Activated CD8-positive, alpha-beta memory T cell treated with anti-CD3 and anti-CD28 coated beads, Interleukin-2, amount 10 ng/mL, durations not matched to agents 7 days and 5 days (primary cell): ENCODE measurements at regions of chr5 and their contacts with region 1.

Region 1: DNA sequence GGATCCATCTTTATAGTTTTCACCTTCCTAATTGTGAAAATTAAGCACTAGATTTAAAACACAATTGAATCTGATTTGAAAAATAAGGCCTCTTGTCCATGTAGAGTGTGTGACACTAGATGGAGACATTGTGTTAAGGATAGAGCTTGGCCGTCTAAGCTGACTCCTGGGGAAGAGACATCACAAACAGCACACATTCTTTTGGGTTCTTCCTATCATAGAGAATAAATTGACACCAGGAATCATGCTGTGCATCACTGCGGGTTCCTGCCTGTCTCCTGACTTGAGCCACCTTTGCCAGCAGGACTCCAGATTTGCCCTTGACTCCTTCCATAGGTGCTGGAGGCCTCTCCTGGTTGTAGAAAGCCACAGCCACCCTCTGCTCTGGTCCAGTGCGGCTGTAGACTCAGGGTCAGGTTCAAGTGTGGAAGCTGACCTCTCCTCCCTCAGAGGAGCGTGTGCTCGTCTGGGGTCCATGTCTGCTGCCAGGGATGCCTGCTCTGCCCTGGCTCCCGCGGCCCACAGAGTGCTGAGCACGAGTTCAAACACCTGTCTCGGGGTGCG is 11.2 kb downstream of the ROPN1L start:
- DNase-seq: no peak
- ATAC-seq: peak; percentile 87
- H3K4me3 Mint-ChIP-seq: no peak overlapping the region
- H3K27ac Mint-ChIP-seq: peak overlapping the region; percentile 13
- H3K4me1 Mint-ChIP-seq: peaks cover 12% of the 10 kb centered on the region
- H3K27me3 Mint-ChIP-seq: no peaks in the 10 kb centered on the region

Region 2: GRCh38 chr5:10441083-10441991 is 11.5 kb before region 1 on chr5 and contains the start of gene ROPN1L:
- CTCF ChIA-PET with region 1: interaction called, 12 read pairs
- DNase-seq: peak; percentile 84
- ATAC-seq: peak; percentile 98
- H3K4me3 Mint-ChIP-seq: peak within 1 kb of the TSS; percentile 79
- H3K27ac Mint-ChIP-seq: peak within 1 kb of the TSS; percentile 26
- H3K4me1 Mint-ChIP-seq: peaks cover 40% of the 10 kb centered on the region
- H3K27me3 Mint-ChIP-seq: peaks cover 12% of the 10 kb centered on the region
- total RNA-seq, gene ROPN1L: 1.1 to 2.4 TPM

Region 3: GRCh38 chr5:10489810-10490426 is 37.1 kb after region 1 on chr5:
- CTCF ChIA-PET with region 1: no interaction called
- DNase-seq: peak; percentile 51
- ATAC-seq: peak; percentile 92
- H3K4me3 Mint-ChIP-seq: no peak overlapping the region
- H3K27ac Mint-ChIP-seq: peak overlapping the region; percentile 55
- H3K4me1 Mint-ChIP-seq: peaks cover 24% of the 10 kb centered on the region
- H3K27me3 Mint-ChIP-seq: no peaks in the 10 kb centered on the region

Region 4: DNA sequence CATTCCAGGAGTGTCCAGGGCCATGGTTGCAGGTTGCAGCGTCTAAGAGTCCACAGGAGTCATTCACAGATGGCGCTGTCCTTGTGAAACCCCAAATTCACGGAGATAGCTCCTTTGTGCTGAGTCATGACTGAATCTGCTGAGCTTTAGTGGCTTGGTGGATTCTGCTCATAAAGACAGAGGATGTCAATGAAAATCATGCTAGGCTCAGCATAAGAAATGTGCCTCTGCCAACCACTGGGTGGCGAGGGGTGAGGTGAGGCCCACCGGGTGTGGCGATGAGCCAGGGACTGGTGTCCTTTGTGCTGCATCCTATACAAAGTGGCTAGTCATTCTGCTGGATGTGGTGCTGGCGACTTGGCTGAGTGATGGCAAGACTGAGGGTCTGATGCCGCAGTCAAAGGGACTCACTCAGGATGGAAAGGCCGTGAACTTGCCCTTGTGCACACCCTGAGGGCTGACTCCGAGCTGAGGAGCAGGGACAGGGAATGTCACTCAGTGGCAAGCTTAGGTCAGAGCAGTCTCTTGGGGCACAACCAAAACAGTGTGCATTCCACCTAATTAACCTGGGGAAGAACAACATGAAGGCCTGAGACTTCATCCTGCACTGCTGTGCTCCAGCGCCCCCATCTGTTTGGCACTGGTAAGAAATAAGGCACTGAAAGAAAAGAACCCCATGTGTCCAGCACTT is 236.7 kb after region 1 on chr5:
- CTCF ChIA-PET with region 1: interaction called, 29 read pairs
- DNase-seq: peak; percentile 58
- ATAC-seq: peak; percentile 58
- H3K4me3 Mint-ChIP-seq: no peak overlapping the region
- H3K27ac Mint-ChIP-seq: no peak overlapping the region
- H3K4me1 Mint-ChIP-seq: peaks cover 12% of the 10 kb centered on the region
- H3K27me3 Mint-ChIP-seq: no peaks in the 10 kb centered on the region